ENCODE measurements at regions of chr11 and their contacts with region 1.

Region 1: DNA sequence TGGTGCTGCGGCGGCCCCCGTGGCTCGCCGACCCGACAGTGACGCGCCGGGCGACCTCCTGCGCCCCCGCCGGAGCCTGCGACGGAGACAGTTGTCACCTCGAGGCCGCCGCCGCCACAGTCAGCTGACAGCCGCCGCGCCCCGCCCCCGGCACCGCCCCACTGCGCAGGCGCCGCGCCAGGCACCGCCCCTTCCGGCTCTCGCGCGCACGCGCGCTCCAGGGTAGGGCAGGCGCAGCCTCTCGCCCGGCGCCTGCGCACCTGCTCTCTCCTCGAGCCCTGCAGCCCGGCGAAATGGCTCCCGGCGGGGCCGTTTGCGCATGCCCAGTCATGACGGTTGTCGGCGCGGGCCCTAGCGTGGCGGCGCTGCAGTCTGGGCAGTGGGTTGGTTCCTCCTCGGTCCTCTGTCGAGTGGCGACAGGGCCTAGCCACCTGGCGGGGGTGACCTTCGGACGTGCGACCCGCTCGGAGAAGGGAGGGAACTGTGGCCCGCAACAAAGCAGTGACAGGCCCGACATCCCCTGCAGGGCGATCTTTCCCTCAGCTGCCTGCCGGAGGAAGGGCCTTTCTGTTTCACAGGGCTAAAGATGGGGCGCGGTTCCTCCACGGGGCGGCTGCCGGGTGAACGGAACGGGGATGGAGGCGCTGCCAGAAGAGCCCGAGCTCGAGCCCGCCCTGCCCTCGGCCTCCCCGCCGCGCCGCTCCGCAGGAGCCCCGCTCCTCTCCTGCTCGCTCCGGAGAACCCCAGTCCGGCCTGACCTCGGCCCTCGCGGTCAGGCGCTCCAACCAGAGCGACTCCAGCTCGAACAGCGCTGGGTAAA is at the start of gene TOLLIP:
- DNase-seq: peak; percentile 91
- H3K4me3 Mint-ChIP-seq: peak within 1 kb of the TSS; percentile 74
- H3K27ac Mint-ChIP-seq: peak within 1 kb of the TSS; percentile 87
- H3K4me1 Mint-ChIP-seq: peaks cover 8% of the 10 kb centered on the region
- H3K27me3 Mint-ChIP-seq: no peaks in the 10 kb centered on the region
- CTCF ChIP-seq: no peak
- total RNA-seq, gene TOLLIP: 58.5 and 58.8 TPM in 2 replicates

Region 2: DNA sequence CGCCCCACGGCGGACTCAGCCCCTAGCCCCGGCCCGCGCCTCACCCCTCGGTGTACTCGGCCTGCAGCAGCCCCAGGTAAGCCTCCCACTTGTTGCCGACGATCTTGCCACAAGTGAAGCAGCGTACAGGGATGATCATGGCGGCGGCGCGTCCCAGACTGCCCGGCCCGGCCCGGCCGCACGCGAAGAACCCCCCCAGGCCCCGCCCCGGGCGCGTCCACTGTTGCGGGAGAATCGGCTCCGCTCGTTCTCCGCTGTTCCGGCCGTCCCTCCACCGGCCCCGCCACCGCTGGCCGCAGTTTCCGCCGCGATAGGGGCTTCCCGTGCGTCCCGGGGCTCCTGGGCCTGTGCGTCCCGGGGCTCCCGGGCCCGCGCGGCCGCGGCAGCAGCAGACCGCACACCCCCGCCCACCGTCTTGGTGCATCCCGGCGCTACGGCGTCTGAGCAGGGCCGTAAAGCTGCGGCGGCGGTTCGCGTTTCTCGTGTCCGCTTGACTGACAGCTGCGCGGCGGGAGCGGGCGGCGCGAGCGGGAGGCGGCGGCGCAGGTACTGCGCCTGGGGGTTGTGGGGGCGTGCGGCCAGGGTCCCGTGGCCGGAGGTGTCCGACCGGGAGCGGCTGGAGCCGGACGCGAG is 467.2 kb before region 1 on chr11 and contains the starts of genes POLR2L and TSPAN4:
- CTCF ChIA-PET with region 1: interaction called, 3 read pairs
- POLR2A ChIA-PET with region 1: interaction called, 11 read pairs
- intact Hi-C with region 1: no loop called
- DNase-seq: peak; percentile 87
- H3K4me3 Mint-ChIP-seq: peak within 1 kb of the TSS; percentile 87
- H3K27ac Mint-ChIP-seq: peak within 1 kb of the TSS; percentile 90
- H3K4me1 Mint-ChIP-seq: peaks cover 31% of the 10 kb centered on the region
- H3K27me3 Mint-ChIP-seq: no peaks in the 10 kb centered on the region
- CTCF ChIP-seq: no peak
- total RNA-seq, gene POLR2L: 96.9 and 118 TPM in 2 replicates
- total RNA-seq, gene TSPAN4: 118 and 148 TPM in 2 replicates

Region 3: GRCh38 chr11:1193326-1194230 is 116.1 kb before region 1 on chr11:
- CTCF ChIA-PET with region 1: no interaction called
- POLR2A ChIA-PET with region 1: no interaction called
- intact Hi-C with region 1: no loop called
- DNase-seq: no peak
- H3K4me3 Mint-ChIP-seq: no peak overlapping the region
- H3K27ac Mint-ChIP-seq: no peak overlapping the region
- H3K4me1 Mint-ChIP-seq: no peaks in the 10 kb centered on the region
- H3K27me3 Mint-ChIP-seq: no peaks in the 10 kb centered on the region
- CTCF ChIP-seq: no peak

Region 4: GRCh38 chr11:1262172-1263006 is 47.3 kb before region 1 on chr11:
- CTCF ChIA-PET with region 1: no interaction called
- POLR2A ChIA-PET with region 1: interaction called, 13 read pairs
- intact Hi-C with region 1: loop called (anchors 1 kb)
- DNase-seq: peak; percentile 91
- H3K4me3 Mint-ChIP-seq: peak overlapping the region; percentile 73
- H3K27ac Mint-ChIP-seq: peak overlapping the region; percentile 42
- H3K4me1 Mint-ChIP-seq: peaks cover 10% of the 10 kb centered on the region
- H3K27me3 Mint-ChIP-seq: no peaks in the 10 kb centered on the region
- CTCF ChIP-seq: no peak

Region 5: GRCh38 chr11:1290052-1291040 is 19.4 kb before region 1 on chr11:
- CTCF ChIA-PET with region 1: no interaction called
- POLR2A ChIA-PET with region 1: no interaction called
- intact Hi-C with region 1: no loop called
- DNase-seq: no peak
- H3K4me3 Mint-ChIP-seq: no peak overlapping the region
- H3K27ac Mint-ChIP-seq: no peak overlapping the region
- H3K4me1 Mint-ChIP-seq: no peaks in the 10 kb centered on the region
- H3K27me3 Mint-ChIP-seq: no peaks in the 10 kb centered on the region
- CTCF ChIP-seq: no peak

Region 6: DNA sequence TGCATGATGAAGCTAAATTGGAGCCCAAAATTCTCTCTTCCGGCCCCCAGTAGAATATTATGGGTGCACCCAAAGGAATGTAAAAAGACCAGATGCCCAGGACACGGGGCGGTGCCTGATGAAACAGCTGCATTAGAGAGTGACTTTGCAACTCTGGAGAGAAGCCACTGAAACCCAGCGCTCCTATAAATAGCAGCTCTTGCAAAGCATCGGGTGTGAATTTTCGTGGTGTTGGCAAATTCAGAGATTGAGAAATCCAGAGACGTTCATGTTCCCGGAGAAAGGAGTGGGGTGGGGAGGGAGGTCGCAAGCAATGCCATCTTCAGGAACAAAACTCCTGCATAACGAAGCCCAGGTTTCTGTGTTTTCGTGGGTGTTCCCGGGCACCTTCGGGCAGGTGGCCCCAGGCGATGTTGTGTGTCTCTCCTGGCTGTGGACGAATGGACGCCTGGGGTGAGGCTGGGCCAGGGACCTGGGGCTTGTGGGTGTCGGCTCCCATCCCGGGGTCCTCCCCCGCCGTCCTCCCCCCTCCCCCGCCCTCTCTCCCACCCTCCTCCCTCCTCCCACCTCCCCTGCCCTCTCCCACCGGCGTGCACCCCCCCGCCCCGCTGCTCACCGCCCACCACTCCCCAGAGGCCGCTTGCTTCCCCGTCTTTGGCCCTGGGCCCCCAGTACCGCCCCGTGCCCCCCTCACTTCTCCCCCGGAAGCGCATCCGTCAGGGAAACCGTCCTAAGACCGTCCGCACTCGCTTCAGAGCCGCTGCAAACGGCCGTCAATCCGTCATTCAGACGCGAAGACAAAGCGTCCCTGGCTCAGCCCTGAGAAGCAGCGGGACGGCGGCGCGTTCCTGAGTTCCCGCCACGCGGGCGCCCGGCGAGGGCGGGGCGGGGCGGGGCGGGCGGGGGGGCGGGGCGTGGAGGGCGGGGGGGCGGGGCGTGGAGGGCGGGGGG is 26.4 kb after region 1 on chr11:
- CTCF ChIA-PET with region 1: interaction called, 4 read pairs
- POLR2A ChIA-PET with region 1: interaction called, 25 read pairs
- intact Hi-C with region 1: no loop called
- DNase-seq: peak; percentile 92
- H3K4me3 Mint-ChIP-seq: peak overlapping the region; percentile 64
- H3K27ac Mint-ChIP-seq: no peak overlapping the region
- H3K4me1 Mint-ChIP-seq: peaks cover 17% of the 10 kb centered on the region
- H3K27me3 Mint-ChIP-seq: peaks cover 12% of the 10 kb centered on the region
- CTCF ChIP-seq: no peak

Region 7: DNA sequence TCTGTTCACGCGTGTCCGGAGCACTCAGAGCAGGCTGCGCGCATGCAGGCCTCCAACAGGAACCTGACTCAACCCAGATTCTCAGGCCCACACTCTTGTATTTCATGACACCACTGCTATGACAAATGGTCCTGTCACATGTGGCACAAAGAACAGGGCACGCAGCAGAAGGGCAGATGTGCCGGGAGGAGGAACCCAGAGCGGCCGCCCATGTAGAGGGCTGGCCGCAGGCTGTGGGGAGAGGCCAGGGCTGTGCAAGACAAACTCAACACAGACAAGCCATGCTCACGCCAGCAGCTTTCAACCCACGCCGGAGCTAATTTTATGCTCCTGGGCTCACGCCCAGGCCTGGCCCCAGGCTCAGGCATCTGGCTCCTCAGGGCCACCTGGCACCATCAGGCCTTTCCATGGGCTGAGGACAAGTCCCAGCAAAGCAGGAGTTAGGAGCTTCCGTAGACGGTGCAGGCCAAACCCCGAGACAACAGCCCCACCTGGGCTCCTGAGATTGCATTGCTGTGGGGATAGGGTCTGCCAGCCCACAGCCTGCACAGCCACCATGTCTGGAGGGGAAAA is 222.4 kb after region 1 on chr11:
- CTCF ChIA-PET with region 1: no interaction called
- POLR2A ChIA-PET with region 1: interaction called, 10 read pairs
- intact Hi-C with region 1: loop called (anchors 10 kb)
- DNase-seq: peak; percentile 45
- H3K4me3 Mint-ChIP-seq: peak overlapping the region; percentile 23
- H3K27ac Mint-ChIP-seq: peak overlapping the region; percentile 82
- H3K4me1 Mint-ChIP-seq: peaks cover 36% of the 10 kb centered on the region
- H3K27me3 Mint-ChIP-seq: no peaks in the 10 kb centered on the region
- CTCF ChIP-seq: no peak